CD4-positive, alpha-beta T cell (primary cell): ENCODE measurements at regions of chrX and their contacts with region 1.

Region 1: GRCh38 chrX:15761564-15762191 is 23.6 kb downstream of the CA5B start:
- DNase-seq: peak in 8 of 14 experiments; percentile 11 to 63 (median 42)
- ATAC-seq: peak; percentile 55
- H3K4me3 ChIP-seq: no peak overlapping the region
- H3K4me3 Mint-ChIP-seq: no peak overlapping the region
- H3K27ac ChIP-seq: no peak overlapping the region
- H3K27ac Mint-ChIP-seq: peak overlapping the region; percentile 79
- H3K4me1 ChIP-seq: peaks cover 38% of the 10 kb centered on the region
- H3K4me1 Mint-ChIP-seq: peaks cover 42% of the 10 kb centered on the region
- H3K27me3 ChIP-seq: no peaks in the 10 kb centered on the region
- H3K27me3 Mint-ChIP-seq: no peaks in the 10 kb centered on the region
- CTCF ChIP-seq: peak; percentile 61

Region 2: DNA sequence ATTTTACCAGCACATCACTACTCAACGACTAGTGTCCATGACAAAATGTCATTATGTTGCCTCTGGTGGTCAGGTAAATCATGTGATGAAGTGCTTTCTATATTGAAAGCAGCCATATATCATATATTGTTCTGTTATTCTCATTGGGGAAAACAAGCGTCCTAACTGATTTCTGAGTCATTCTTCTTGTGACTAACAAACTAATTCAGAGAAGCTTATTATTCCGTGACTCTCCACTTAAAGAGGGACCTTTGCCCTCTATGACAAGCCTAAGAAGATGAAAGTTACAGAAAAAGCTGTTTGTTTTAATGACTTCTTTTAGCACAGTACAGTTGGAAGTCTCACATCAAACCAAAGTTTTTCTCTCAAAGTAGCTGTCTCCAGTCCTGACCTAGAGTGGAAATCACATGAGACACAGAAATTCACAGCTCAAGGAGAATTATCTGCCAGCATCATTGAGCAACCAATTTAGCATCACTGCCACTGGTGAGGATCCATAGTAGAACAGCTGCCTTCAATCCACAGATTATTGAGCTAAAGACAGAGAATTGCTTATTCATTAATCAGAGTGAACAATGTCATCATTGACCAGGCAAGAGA is 528.2 kb before region 1 on chrX:
- CTCF ChIA-PET with region 1: no interaction called
- POLR2A ChIA-PET with region 1: no interaction called
- intact Hi-C with region 1: no loop called
- DNase-seq: no peak
- ATAC-seq: no peak
- H3K4me3 ChIP-seq: no peak overlapping the region
- H3K4me3 Mint-ChIP-seq: no peak overlapping the region
- H3K27ac ChIP-seq: no peak overlapping the region
- H3K27ac Mint-ChIP-seq: no peak overlapping the region
- H3K4me1 ChIP-seq: no peaks in the 10 kb centered on the region
- H3K4me1 Mint-ChIP-seq: no peaks in the 10 kb centered on the region
- H3K27me3 ChIP-seq: no peaks in the 10 kb centered on the region
- H3K27me3 Mint-ChIP-seq: no peaks in the 10 kb centered on the region
- CTCF ChIP-seq: no peak

Region 3: DNA sequence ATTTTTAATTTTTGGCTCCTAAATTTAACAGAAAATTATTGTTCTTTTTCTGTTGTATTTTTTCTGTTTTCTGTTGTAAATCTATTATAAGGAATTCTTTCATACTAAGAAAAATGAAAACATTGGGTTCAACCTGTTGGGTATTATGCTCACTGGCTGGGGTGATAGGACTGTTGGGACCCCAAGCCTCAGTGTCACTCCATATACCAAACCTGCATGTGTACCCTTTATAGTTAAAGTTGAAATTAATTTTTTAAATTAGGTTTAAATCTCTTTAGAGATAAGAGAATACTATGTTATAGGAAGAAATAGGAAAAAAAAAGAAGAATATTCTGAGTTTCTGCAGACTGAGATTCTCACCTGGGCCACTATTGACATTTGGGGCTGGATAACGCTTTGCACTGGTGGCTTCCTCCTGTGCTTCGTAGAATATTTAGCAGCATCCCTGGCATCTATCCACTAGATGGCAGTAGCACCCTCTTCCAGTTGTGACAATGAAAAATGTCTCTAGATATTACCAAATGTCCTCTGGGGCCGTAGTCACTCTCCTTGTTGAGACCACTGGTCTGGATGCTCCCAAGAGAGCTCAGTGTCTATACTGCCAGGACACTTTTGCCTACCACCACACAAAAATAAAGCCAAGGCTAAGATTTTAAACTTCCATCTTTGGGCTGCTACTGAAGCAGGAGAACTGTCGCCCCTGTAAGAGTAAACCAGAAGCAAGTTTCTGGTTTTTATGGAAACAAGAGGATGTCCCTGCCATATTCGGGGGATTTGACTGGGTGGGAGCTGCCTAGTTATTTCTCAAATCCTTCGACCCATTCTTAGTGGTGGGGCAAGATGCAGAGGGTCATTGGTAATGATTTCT is 74.6 kb before region 1 on chrX:
- CTCF ChIA-PET with region 1: interaction called, 3 read pairs
- POLR2A ChIA-PET with region 1: interaction called, 5 read pairs
- intact Hi-C with region 1: loop called (anchors 2 to 5 kb)
- DNase-seq: peak; percentile 29 to 81 (median 42)
- ATAC-seq: peak; percentile 96
- H3K4me3 ChIP-seq: no peak overlapping the region
- H3K4me3 Mint-ChIP-seq: peak overlapping the region; percentile 31
- H3K27ac ChIP-seq: no peak overlapping the region
- H3K27ac Mint-ChIP-seq: peak overlapping the region; percentile 24
- H3K4me1 ChIP-seq: peaks cover 8% of the 10 kb centered on the region
- H3K4me1 Mint-ChIP-seq: peaks cover 12% of the 10 kb centered on the region
- H3K27me3 ChIP-seq: no peaks in the 10 kb centered on the region
- H3K27me3 Mint-ChIP-seq: no peaks in the 10 kb centered on the region
- CTCF ChIP-seq: peak; percentile 61

Region 4: DNA sequence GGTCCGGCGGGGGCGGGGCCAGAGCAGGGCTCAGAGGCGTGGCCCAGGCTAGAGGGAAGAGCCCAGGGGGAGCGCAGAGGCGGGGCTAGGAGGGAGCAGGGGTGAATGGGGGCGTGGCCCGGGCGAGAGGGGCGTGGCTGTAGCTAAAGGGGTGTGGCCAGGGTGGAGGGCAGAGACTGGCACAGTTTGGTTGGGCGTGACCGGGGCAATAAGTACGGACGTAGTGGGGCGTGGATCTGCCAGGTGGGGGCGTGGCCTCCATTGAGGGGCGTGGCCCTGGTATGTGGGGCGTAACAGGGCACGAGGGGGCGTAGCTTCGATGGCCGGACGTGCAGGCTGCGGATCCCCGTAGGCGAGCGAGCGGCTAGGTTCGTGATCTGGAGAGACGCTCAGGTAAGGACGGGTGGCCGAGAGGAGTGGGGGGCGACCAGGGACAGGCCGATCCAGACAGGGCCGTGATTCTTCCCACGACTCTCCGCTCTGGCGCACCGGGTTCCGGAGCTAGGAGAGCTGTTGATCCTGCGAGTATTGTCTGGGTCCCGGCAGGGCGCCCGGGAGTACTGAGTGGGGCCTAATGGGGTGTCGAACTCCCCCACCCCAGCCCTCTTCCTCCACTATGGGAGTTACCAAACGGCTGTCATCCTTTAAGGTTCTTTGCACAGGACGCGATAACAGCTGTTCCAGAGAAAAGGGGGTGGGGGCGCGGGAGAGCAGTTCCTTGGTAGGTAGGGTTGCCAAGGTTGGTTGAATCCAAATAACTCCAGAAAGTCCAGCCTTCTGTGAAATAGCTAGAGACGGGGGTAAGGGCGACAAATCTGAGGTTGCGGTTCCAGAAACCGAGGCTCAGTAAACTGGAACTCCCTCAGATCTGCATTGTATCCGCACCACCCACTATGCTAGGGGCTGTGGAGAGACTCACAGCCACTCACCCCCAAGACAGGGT is 23.4 kb before region 1 on chrX and contains the start of gene CA5B:
- CTCF ChIA-PET with region 1: interaction called, 18 read pairs
- POLR2A ChIA-PET with region 1: interaction called, 204 read pairs
- intact Hi-C with region 1: no loop called
- DNase-seq: peak; percentile 95 to 100 (median 97)
- ATAC-seq: peak; percentile 93
- H3K4me3 ChIP-seq: peak within 1 kb of the TSS; percentile 91
- H3K4me3 Mint-ChIP-seq: peak within 1 kb of the TSS; percentile 100
- H3K27ac ChIP-seq: peak within 1 kb of the TSS; percentile 64 to 82
- H3K27ac Mint-ChIP-seq: peak within 1 kb of the TSS; percentile 92
- H3K4me1 ChIP-seq: peaks cover 28% of the 10 kb centered on the region
- H3K4me1 Mint-ChIP-seq: peaks cover 55% of the 10 kb centered on the region
- H3K27me3 ChIP-seq: no peaks in the 10 kb centered on the region
- H3K27me3 Mint-ChIP-seq: no peaks in the 10 kb centered on the region
- CTCF ChIP-seq: no peak
- total RNA-seq, gene CA5B: 60.8 to 64.5 TPM

Region 5: DNA sequence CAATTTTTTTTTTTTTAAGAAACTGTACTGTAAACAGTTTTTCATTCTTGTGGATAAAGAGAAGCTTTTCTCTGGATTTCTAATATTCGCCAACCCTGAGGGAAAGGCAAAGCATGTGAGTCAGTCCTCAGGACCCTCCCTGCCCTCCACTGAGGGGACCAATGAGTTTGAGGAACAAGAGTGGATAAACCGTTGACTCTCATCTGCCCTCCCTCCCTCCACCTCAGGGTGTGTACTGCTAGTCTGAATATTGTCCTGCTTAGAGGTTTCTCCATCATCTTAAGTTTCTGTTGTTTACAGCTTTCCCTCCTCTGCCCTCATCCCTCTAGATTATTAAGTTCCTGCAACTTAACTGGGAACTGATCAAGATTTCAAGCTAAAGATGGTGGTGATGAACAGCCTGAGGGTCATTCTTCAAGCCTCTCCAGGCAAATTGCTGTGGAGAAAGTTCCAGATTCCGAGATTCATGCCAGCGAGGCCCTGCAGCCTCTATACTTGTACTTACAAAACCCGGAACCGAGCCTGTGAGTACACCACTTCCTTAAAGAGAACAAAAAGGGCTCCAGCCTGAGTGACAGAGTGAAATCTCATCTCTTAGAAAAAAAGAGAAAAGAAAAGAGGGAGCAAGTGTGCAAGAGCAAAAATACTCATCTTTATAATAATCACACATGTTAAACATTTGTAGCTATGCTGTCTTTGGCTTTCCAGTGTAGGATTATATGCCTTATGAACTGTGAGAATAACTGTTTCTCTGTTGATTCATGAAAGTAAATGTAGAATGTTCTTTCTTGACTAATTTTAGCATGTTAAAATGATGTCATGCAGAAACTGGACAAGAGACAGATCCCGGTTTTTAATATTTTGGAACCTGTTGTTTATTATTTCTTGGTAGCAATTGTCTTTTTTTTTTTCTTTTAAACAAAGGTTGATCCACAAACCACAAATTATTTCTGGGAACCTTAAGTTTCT is 11.8 kb before region 1 on chrX:
- CTCF ChIA-PET with region 1: interaction called, 7 read pairs
- POLR2A ChIA-PET with region 1: interaction called, 10 read pairs
- intact Hi-C with region 1: no loop called
- DNase-seq: peak in 6 of 14 experiments; percentile 12 to 65 (median 60)
- ATAC-seq: peak; percentile 57
- H3K4me3 ChIP-seq: peak overlapping the region; percentile 19
- H3K4me3 Mint-ChIP-seq: peak overlapping the region; percentile 64
- H3K27ac ChIP-seq: peak overlapping the region; percentile 82 to 98
- H3K27ac Mint-ChIP-seq: peak overlapping the region; percentile 91
- H3K4me1 ChIP-seq: peaks cover 60% of the 10 kb centered on the region
- H3K4me1 Mint-ChIP-seq: peaks cover 86% of the 10 kb centered on the region
- H3K27me3 ChIP-seq: no peaks in the 10 kb centered on the region
- H3K27me3 Mint-ChIP-seq: no peaks in the 10 kb centered on the region
- CTCF ChIP-seq: no peak

Region 6: DNA sequence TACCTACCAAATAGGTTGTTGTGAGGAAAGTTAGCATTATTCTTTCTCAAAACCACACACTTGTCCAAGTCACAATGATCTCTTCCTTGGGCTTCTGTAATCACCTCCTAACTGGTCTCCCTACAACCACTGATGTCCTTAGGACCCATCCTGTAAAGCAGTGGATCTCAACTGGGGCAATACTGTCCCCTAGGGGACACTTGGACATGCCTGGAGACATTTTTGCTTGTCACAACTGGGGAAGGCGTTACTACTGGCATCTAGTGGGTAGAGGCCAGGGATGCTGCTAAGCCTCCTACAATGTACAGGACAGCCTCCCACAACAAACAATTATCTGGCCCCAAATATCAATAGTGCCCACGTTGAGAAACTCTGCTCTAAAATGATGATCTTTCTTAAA is 211.6 kb after region 1 on chrX:
- CTCF ChIA-PET with region 1: no interaction called
- POLR2A ChIA-PET with region 1: no interaction called
- intact Hi-C with region 1: loop called in 1 of 2 experiments (anchors 5 kb)
- DNase-seq: peak in 5 of 14 experiments; percentile 1 to 35 (median 25)
- ATAC-seq: peak; percentile 44
- H3K4me3 ChIP-seq: no peak overlapping the region
- H3K4me3 Mint-ChIP-seq: no peak overlapping the region
- H3K27ac ChIP-seq: no peak overlapping the region
- H3K27ac Mint-ChIP-seq: no peak overlapping the region
- H3K4me1 ChIP-seq: no peaks in the 10 kb centered on the region
- H3K4me1 Mint-ChIP-seq: no peaks in the 10 kb centered on the region
- H3K27me3 ChIP-seq: no peaks in the 10 kb centered on the region
- H3K27me3 Mint-ChIP-seq: no peaks in the 10 kb centered on the region
- CTCF ChIP-seq: no peak

Region 7: DNA sequence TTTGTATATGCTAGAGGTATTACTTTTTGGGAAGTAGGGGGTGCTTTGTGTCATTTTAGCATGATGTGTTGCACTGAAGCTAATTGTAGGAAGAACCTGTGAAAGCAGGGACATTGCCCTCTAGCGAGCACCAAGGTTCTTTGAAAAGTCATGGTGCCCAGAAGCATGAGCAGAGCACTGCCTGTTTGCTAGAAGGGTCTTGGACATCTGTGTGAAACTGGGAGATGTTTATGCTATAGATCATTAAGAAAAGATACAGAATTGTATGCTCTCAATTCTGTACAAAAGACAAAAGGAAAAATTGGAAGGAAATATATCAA is 376.4 kb after region 1 on chrX:
- CTCF ChIA-PET with region 1: no interaction called
- POLR2A ChIA-PET with region 1: no interaction called
- intact Hi-C with region 1: loop called in 1 of 2 experiments (anchors 5 kb)
- DNase-seq: peak in 2 of 14 experiments; percentile 4 to 11
- ATAC-seq: no peak
- H3K4me3 ChIP-seq: no peak overlapping the region
- H3K4me3 Mint-ChIP-seq: no peak overlapping the region
- H3K27ac ChIP-seq: no peak overlapping the region
- H3K27ac Mint-ChIP-seq: no peak overlapping the region
- H3K4me1 ChIP-seq: no peaks in the 10 kb centered on the region
- H3K4me1 Mint-ChIP-seq: no peaks in the 10 kb centered on the region
- H3K27me3 ChIP-seq: no peaks in the 10 kb centered on the region
- H3K27me3 Mint-ChIP-seq: peaks cover 4% of the 10 kb centered on the region
- CTCF ChIP-seq: no peak

Region 8: GRCh38 chrX:16436348-16437188 is 674.9 kb after region 1 on chrX:
- CTCF ChIA-PET with region 1: interaction called, 3 read pairs
- POLR2A ChIA-PET with region 1: no interaction called
- intact Hi-C with region 1: loop called in 1 of 2 experiments (anchors 10 kb)
- DNase-seq: peak; percentile 29 to 77 (median 48)
- ATAC-seq: no peak
- H3K4me3 ChIP-seq: no peak overlapping the region
- H3K4me3 Mint-ChIP-seq: no peak overlapping the region
- H3K27ac ChIP-seq: no peak overlapping the region
- H3K27ac Mint-ChIP-seq: no peak overlapping the region
- H3K4me1 ChIP-seq: peaks cover 16% of the 10 kb centered on the region
- H3K4me1 Mint-ChIP-seq: peaks cover 16% of the 10 kb centered on the region
- H3K27me3 ChIP-seq: no peaks in the 10 kb centered on the region
- H3K27me3 Mint-ChIP-seq: no peaks in the 10 kb centered on the region
- CTCF ChIP-seq: peak; percentile 61